A549 (cell line): ENCODE measurements at regions of chr5 and their contacts with region 1.

Region 1: GRCh38 chr5:140547508-140548299 is at the start of gene EIF4EBP3:
- DNase-seq: peak; percentile 87 to 90
- ATAC-seq: peak; percentile 94 to 96
- H3K4me3 ChIP-seq: no peak within 1 kb of the TSS
- H3K27ac ChIP-seq: peak within 1 kb of the TSS; percentile 56 to 75
- H3K4me1 ChIP-seq: peaks cover 26% of the 10 kb centered on the region
- CTCF ChIP-seq: no peak
- EP300 ChIP-seq: no peak
- POLR2A ChIP-seq: no peak
- RAD21 ChIP-seq: no peak
- polyA plus RNA-seq, gene EIF4EBP3: 2.0 and 2.9 TPM in 2 replicates

Region 2: GRCh38 chr5:140632150-140633020 is 84.7 kb after region 1 on chr5:
- CTCF ChIA-PET with region 1: interaction called, 21 read pairs
- POLR2A ChIA-PET with region 1: interaction called, 3 read pairs
- DNase-seq: no peak
- ATAC-seq: no peak; a peak in 1 of 6 replicates
- H3K4me3 ChIP-seq: 0 out of 3 replicates have a peak overlapping the region, but pooled peaks have one; percentile 5
- H3K27ac ChIP-seq: peak overlapping the region; percentile 45 to 83
- H3K4me1 ChIP-seq: peaks cover 32% of the 10 kb centered on the region
- CTCF ChIP-seq: no peak
- EP300 ChIP-seq: no peak
- POLR2A ChIP-seq: no peak
- RAD21 ChIP-seq: no peak

Region 3: DNA sequence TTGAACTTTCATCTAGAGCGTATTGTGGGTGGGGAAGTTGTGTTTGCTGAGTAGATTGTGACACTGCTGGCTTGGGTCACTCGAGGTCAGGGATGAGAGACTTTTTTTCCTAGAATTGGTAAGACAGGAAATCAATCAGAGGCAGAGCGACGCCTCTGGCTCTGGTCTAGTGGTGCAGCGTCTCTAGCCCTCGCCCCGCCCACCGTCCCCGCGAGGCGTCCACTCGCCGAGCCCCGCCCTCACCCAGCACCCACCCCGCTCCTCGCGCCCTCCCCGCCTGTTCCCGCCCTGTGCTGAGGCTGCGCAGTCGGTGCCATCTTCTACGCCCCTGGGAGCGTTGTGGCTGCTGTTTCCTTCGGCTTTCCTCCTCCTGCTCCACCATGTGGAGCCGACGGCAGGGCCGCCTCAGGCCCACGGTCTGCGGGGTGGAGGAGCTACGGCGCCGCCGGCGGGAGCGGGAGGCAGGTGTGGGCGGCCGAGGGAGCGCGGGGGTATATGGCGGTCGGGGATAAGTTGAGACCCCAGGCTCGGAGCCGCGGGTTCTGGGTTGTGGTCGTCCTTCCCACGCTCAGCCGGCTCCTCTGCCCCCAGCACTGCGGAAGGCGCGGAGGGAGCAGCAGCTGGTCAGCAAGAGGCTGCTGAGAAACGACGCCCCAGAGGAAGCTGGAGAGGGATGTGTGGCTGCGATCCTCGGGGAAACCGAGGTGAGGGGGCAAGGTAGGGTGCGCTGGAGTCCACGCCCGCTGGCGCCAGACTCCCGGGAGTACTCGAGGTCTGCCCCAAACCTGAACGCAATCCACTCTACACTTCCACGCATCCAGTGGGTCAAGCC is 91.7 kb after region 1 on chr5 and contains the start of gene TMCO6:
- CTCF ChIA-PET with region 1: interaction called, 21 read pairs
- POLR2A ChIA-PET with region 1: no interaction called
- DNase-seq: peak; percentile 96
- ATAC-seq: peak; percentile 91 to 96
- H3K4me3 ChIP-seq: peak within 1 kb of the TSS; percentile 68
- H3K27ac ChIP-seq: peak within 1 kb of the TSS; percentile 91 to 94
- H3K4me1 ChIP-seq: peaks cover 21% of the 10 kb centered on the region
- CTCF ChIP-seq: peak; percentile 59
- EP300 ChIP-seq: no peak
- POLR2A ChIP-seq: peak; percentile 94
- RAD21 ChIP-seq: peak; percentile 44 to 69
- polyA plus RNA-seq, gene TMCO6: 11.8 and 14.6 TPM in 2 replicates